ENCODE measurements at regions of chr6 and their contacts with region 1.

Region 1: DNA sequence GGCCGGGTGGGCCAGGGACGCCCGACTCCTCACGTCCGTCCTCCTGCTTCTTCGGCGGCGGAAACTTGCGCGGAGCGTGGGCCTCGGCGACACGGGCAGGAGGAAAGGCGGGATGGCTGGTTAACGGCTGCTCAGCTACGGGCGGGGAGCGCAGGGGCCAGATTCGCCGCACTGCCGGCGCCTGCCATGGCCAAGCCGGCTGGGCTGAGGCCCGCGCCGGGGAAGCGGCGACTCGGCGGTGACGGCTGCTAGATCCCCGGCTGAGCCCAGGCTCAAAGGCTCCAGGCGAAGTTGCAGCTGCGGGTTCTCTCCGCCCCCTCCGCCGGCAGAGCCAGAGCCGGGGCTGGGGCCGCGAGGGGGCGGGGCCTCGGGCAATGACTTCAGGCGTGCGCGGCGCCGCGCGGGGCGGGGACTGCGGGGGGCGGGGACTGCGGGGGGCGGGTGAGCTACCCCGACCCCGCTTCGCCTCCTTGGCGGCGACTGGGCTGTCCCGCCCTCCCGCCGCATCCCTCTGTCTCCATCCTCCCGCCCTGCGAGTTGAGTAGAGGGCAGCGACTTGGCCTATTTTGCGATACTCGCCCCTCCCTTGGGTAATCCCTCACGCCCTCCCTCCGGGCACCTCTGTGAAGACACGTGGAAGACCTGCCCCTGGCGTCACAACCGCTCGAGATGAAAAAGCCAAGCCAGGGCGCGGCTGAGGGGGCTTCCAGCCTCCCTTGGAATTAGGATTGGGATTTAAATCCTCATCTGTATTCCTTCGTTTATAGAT is at the start of gene CEP85L:
- DNase-seq: peak; percentile 90
- H3K4me3 ChIP-seq: peak within 1 kb of the TSS; percentile 57 to 98 (median 93)
- H3K27ac ChIP-seq: peak within 1 kb of the TSS; percentile 95
- H3K4me1 ChIP-seq: peaks cover 21% of the 10 kb centered on the region
- H3K27me3 ChIP-seq: no peaks in the 10 kb centered on the region
- CTCF ChIP-seq: no peak
- POLR2A ChIP-seq: peak; percentile 84
- total RNA-seq, gene CEP85L: 9.2 and 12.0 TPM in 2 replicates

Region 2: GRCh38 chr6:118679327-118679901 is 27.9 kb after region 1 on chr6:
- CTCF ChIA-PET with region 1: no interaction called
- POLR2A ChIA-PET with region 1: no interaction called
- dilution Hi-C with region 1: no loop called
- intact Hi-C with region 1: no loop called
- DNase-seq: no peak
- H3K4me3 ChIP-seq: no peak overlapping the region
- H3K27ac ChIP-seq: no peak overlapping the region
- H3K4me1 ChIP-seq: no peaks in the 10 kb centered on the region
- H3K27me3 ChIP-seq: no peaks in the 10 kb centered on the region
- CTCF ChIP-seq: no peak
- POLR2A ChIP-seq: no peak

Region 3: DNA sequence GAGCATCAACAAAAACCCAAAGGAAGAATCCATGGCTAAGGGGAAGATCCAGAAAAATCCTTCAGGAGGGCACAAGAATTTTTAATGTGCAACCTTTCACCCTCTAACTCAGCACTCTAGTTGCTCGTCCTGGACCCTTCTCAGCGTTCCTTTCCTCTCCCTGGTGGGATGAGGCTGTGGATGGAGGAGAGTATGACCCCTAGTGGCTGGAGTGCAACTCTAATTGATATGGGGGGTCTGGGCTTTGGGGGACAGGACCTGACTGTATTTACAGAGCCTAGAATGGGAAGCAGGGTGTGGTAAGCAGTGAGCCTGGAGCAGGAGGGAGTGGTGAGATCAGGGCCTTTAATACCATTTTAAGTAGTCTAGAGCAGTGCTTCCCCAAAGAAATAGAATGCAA is 83.9 kb after region 1 on chr6:
- CTCF ChIA-PET with region 1: no interaction called
- POLR2A ChIA-PET with region 1: no interaction called
- dilution Hi-C with region 1: no loop called
- intact Hi-C with region 1: loop called (anchors 1 kb)
- DNase-seq: peak; percentile 49
- H3K4me3 ChIP-seq: no peak overlapping the region
- H3K27ac ChIP-seq: no peak overlapping the region
- H3K4me1 ChIP-seq: no peaks in the 10 kb centered on the region
- H3K27me3 ChIP-seq: peaks cover 2 to 4% of the 10 kb centered on the region in 2 experiments
- CTCF ChIP-seq: peak; percentile 42 to 66
- POLR2A ChIP-seq: no peak

Region 4: GRCh38 chr6:118776607-118777549 is 125.4 kb after region 1 on chr6:
- CTCF ChIA-PET with region 1: no interaction called
- POLR2A ChIA-PET with region 1: no interaction called
- dilution Hi-C with region 1: no loop called
- intact Hi-C with region 1: loop called (anchors 1 kb)
- DNase-seq: peak; percentile 84
- H3K4me3 ChIP-seq: no peak overlapping the region
- H3K27ac ChIP-seq: no peak overlapping the region
- H3K4me1 ChIP-seq: no peaks in the 10 kb centered on the region
- H3K27me3 ChIP-seq: peaks cover 7% of the 10 kb centered on the region in 2 experiments
- CTCF ChIP-seq: peak; percentile 58 to 59
- POLR2A ChIP-seq: no peak

Region 5: GRCh38 chr6:118800394-118801071 is 149.1 kb after region 1 on chr6:
- CTCF ChIA-PET with region 1: interaction called, 3 read pairs
- POLR2A ChIA-PET with region 1: no interaction called
- dilution Hi-C with region 1: no loop called
- intact Hi-C with region 1: loop called (anchors 5 kb)
- DNase-seq: peak; percentile 76
- H3K4me3 ChIP-seq: no peak overlapping the region
- H3K27ac ChIP-seq: no peak overlapping the region
- H3K4me1 ChIP-seq: no peaks in the 10 kb centered on the region
- H3K27me3 ChIP-seq: no peaks in the 10 kb centered on the region
- CTCF ChIP-seq: peak; percentile 83 to 86
- POLR2A ChIP-seq: no peak

Region 6: GRCh38 chr6:118934461-118935330 is 283.2 kb after region 1 on chr6 and contains the start of gene MCM9:
- CTCF ChIA-PET with region 1: no interaction called
- POLR2A ChIA-PET with region 1: no interaction called
- dilution Hi-C with region 1: no loop called
- intact Hi-C with region 1: loop called (anchors 1 kb)
- DNase-seq: peak; percentile 95
- H3K4me3 ChIP-seq: peak within 1 kb of the TSS; percentile 79 to 92 (median 80)
- H3K27ac ChIP-seq: peak within 1 kb of the TSS; percentile 85
- H3K4me1 ChIP-seq: peaks cover 10% of the 10 kb centered on the region
- H3K27me3 ChIP-seq: no peaks in the 10 kb centered on the region
- CTCF ChIP-seq: no peak
- POLR2A ChIP-seq: peak; percentile 66
- total RNA-seq, gene MCM9: 14.1 and 14.6 TPM in 2 replicates

Measured in endothelial cell of umbilical vein (primary cell).